Activated naive CD4-positive, alpha-beta T cell treated with anti-CD3 and anti-CD28 coated beads for 36 hours (primary cell): ENCODE measurements at regions of chr9 and their contacts with region 1.

Region 1: GRCh38 chr9:22175972-22176545 is 167.0 kb upstream of the CDKN2B start:
- DNase-seq: peak; percentile 16
- H3K4me3 Mint-ChIP-seq: no peak overlapping the region
- H3K27ac Mint-ChIP-seq: no peak overlapping the region
- H3K4me1 Mint-ChIP-seq: peaks cover 10% of the 10 kb centered on the region
- H3K27me3 Mint-ChIP-seq: peaks cover 34% of the 10 kb centered on the region

Region 2: GRCh38 chr9:22008736-22009562 is 167.1 kb before region 1 on chr9 and contains the start of gene CDKN2B:
- CTCF ChIA-PET with region 1: no interaction called
- intact Hi-C with region 1: no loop called
- DNase-seq: peak; percentile 63
- H3K4me3 Mint-ChIP-seq: peak within 1 kb of the TSS; percentile 74
- H3K27ac Mint-ChIP-seq: no peak within 1 kb of the TSS
- H3K4me1 Mint-ChIP-seq: peaks cover 18% of the 10 kb centered on the region
- H3K27me3 Mint-ChIP-seq: peaks cover 62% of the 10 kb centered on the region
- total RNA-seq, gene CDKN2B: not detected

Region 3: GRCh38 chr9:22052376-22052945 is 123.6 kb before region 1 on chr9:
- CTCF ChIA-PET with region 1: no interaction called
- intact Hi-C with region 1: loop called (anchors 5 kb)
- DNase-seq: peak; percentile 67
- H3K4me3 Mint-ChIP-seq: no peak overlapping the region
- H3K27ac Mint-ChIP-seq: no peak overlapping the region
- H3K4me1 Mint-ChIP-seq: peaks cover 29% of the 10 kb centered on the region
- H3K27me3 Mint-ChIP-seq: peaks cover 20% of the 10 kb centered on the region

Region 4: GRCh38 chr9:22105005-22105722 is 70.9 kb before region 1 on chr9:
- CTCF ChIA-PET with region 1: no interaction called
- intact Hi-C with region 1: no loop called
- DNase-seq: no peak
- H3K4me3 Mint-ChIP-seq: no peak overlapping the region
- H3K27ac Mint-ChIP-seq: no peak overlapping the region
- H3K4me1 Mint-ChIP-seq: peaks cover 5% of the 10 kb centered on the region
- H3K27me3 Mint-ChIP-seq: peaks cover 6% of the 10 kb centered on the region

Region 5: GRCh38 chr9:22147813-22148524 is 28.1 kb before region 1 on chr9:
- CTCF ChIA-PET with region 1: interaction called, 3 read pairs
- intact Hi-C with region 1: loop called (anchors 1 kb)
- DNase-seq: peak; percentile 28
- H3K4me3 Mint-ChIP-seq: no peak overlapping the region
- H3K27ac Mint-ChIP-seq: no peak overlapping the region
- H3K4me1 Mint-ChIP-seq: peaks cover 22% of the 10 kb centered on the region
- H3K27me3 Mint-ChIP-seq: peaks cover 11% of the 10 kb centered on the region

Region 6: DNA sequence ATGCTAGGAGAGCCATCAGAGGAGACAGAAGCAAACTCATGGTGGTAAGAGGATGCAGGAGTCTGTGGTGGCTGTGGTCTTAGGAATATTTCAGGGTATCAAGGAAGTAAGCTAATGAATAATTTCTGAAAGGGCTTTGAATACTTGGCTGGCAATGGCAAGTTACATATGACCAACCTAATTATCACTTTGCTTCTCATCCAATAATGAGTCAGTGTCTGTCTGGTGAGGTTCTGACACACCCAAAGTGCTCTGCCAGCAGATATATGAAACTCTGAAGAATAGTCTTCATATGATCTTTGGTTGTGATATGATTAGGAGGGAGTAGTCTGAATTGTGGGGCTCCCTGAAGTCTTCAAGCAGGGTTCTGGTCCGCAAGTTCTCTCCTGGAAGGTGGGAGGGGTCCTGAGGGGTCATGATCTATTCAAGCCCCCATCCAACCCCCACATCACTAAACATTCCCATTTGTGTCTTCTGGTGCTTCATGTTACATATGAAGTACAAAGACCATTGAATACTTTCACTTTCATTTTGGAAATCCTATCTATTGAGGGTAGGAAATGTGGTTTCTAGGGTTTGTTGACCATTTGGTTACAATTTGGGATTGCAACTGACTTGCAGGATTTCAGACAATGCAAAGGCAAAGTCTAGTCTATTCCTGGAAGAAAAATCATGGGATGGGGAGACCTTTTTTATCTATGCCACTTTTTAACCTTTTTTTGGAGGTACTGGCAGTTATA is 33.0 kb after region 1 on chr9:
- CTCF ChIA-PET with region 1: no interaction called
- intact Hi-C with region 1: loop called (anchors 1 kb)
- DNase-seq: peak; percentile 14
- H3K4me3 Mint-ChIP-seq: no peak overlapping the region
- H3K27ac Mint-ChIP-seq: no peak overlapping the region
- H3K4me1 Mint-ChIP-seq: peaks cover 22% of the 10 kb centered on the region
- H3K27me3 Mint-ChIP-seq: no peaks in the 10 kb centered on the region